RWPE1 (cell line): ENCODE measurements at regions of chr12 and their contacts with region 1.

Region 1: DNA sequence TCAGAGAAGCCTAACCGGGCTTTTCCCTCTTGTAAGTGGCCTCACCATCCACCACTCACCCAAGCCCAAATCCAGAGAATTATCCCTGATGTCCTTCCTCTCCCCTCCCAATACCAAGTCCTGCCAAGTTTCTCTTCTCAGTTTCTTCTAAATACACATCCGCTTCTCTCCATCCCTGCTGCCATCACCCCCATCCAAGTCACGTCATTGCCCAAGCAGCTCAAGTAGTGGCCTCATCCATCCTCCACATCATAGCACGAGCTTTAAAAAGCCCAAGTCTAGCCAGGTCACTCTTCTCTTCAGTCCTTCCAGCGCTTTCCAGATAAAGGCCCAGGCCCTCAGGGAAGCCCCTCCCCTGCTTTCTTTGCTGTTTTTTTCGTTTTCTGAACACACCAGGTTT is 25.4 kb downstream of the IL31 start:
- DNase-seq: no peak
- H3K27ac ChIP-seq: no peak overlapping the region
- CTCF ChIP-seq: no peak

Region 2: DNA sequence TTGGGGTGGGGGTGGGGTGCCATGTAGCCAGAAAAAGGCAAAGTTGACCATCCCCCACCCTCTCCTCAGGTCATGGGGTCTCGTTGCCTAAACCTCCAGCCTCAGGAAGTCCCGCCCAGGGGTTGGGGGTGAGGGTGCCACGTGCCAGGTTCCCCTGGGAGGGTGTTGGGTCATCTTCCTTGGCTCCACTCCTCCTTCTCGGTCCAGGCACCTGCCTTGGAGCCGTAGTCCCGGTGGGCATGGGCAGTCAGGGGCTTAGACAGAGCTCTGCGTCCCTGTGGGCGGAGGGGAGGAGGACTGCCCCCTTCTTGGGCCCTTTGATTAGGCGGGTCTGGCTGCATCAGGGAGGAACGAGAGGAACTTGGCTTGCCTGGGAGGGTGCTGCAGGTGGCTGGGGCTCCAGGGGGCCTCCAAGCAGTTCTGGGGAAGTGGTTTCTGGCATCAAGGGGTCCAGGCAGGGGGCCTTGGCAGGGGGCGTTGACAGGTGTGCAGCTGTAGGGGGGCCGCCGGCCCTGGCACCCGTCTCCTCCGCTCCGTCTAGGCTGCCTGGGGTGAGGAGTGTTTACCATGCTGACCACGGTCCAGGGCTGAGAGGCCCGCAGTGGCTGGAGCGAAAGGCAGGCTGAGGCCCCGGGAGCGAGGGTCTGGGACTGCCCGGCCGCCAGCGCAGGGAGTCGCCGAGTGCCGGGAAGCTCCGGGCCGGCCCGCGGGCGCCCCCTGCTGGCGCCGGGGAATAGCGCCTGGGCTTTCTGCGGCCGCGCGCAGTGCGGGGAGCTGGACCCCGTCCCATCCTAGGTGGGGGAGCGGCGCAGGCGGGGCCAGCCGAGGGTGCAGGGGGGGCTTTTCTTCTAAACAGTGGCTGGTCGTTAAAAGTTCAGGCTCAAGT is 337.0 kb before region 1 on chr12:
- CTCF ChIA-PET with region 1: interaction called, 11 read pairs
- POLR2A ChIA-PET with region 1: no interaction called
- DNase-seq: no peak
- H3K27ac ChIP-seq: peak overlapping the region; percentile 99
- CTCF ChIP-seq: peak; percentile 96